Prostate gland (tissue), 2 donors: ENCODE measurements at regions of chr2 and their contacts with region 1.

Region 1: GRCh38 chr2:177164584-177165052 is 48.0 kb upstream of the HNRNPA3 start:
- DNase-seq: peak; percentile 74
- H3K4me3 ChIP-seq: peak overlapping the region; percentile 8 to 22
- H3K27ac ChIP-seq: peak overlapping the region; percentile 69 to 78
- H3K4me1 ChIP-seq: no peaks in the 10 kb centered on the region
- H3K27me3 ChIP-seq: no peaks in the 10 kb centered on the region
- CTCF ChIP-seq: peak; percentile 98 to 100 (median 100)
- POLR2A ChIP-seq: no peak

Region 2: DNA sequence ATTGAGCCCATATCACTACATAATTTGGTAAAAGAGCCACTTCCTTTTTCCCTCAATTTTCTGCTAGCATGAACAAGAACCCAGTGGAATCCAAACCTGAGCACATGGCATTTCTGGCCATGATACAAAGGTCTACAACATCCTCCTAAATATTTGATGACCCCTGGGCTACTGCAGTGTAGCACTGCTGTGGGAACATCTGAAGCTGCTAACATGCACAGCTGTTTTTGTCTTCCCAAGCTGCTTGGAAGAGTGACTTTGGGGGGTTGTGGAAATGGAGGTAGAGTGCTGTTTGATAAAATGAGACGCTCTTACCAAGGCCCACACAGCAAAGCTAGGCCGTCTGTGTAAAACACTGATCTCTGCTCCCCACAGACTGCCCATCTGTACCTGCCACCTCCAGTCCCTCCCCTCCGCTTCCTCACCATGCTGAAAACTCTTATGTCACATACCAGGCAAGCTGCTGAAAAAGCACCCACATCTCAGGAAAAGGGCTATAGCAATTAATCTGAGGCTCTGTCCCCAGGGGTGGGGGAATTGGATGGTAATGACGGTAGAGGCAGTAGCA is 149.2 kb before region 1 on chr2:
- intact Hi-C with region 1: no loop called
- DNase-seq: no peak
- H3K4me3 ChIP-seq: no peak overlapping the region
- H3K27ac ChIP-seq: no peak overlapping the region
- H3K4me1 ChIP-seq: no peaks in the 10 kb centered on the region
- H3K27me3 ChIP-seq: no peaks in the 10 kb centered on the region
- CTCF ChIP-seq: no peak
- POLR2A ChIP-seq: no peak

Region 3: DNA sequence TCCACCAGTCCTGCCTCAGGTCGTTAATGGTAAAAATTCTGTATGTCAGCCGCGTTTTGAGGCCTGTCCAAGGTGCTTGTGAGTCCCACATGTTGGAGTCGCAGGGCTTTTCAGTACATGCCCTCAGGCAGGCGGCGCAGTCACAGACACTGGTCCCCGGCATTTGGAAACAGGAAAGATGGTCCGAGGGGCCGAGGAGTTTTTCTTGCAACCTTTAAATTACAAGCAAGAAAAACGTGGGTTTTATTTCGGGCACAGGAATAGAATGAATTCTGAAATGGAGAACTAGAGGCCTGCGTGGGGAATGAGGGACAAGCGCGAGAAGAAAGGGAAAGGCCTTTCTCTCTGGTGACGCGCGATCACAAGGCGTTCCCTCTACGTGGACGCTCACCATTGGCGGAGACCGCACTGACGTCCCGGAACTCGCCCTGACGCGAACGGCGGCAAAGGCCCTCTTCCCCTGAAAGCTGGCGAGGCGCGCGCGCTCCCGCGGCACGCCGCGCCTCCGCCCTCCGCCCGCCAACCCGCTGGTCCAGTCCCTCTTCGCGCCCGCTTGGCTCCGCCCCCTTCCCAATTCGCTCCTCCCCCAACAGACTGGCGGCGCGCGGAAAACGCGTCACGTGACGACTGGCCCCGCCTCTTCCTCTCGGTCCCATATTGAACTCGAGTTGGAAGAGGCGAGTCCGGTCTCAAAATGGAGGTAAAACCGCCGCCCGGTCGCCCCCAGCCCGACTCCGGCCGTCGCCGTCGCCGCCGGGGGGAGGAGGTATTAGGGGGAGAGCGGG is 47.7 kb after region 1 on chr2 and contains the start of gene HNRNPA3:
- intact Hi-C with region 1: loop called (anchors 2 kb)
- DNase-seq: peak; percentile 99
- H3K4me3 ChIP-seq: peak within 1 kb of the TSS; percentile 78 to 85
- H3K27ac ChIP-seq: peak within 1 kb of the TSS; percentile 99
- H3K4me1 ChIP-seq: peaks cover 9% of the 10 kb centered on the region
- H3K27me3 ChIP-seq: no peaks in the 10 kb centered on the region
- CTCF ChIP-seq: peak in 3 of 4 experiments; percentile 27 to 44 (median 32)
- POLR2A ChIP-seq: peak; percentile 91
- total RNA-seq, gene HNRNPA3: 56.5 to 57.0 TPM

Region 4: GRCh38 chr2:177296040-177296439 is 131.4 kb after region 1 on chr2:
- intact Hi-C with region 1: loop called (anchors 10 kb)
- DNase-seq: no peak
- H3K4me3 ChIP-seq: no peak overlapping the region
- H3K27ac ChIP-seq: peak overlapping the region; percentile 25 to 43
- H3K4me1 ChIP-seq: no peaks in the 10 kb centered on the region
- H3K27me3 ChIP-seq: no peaks in the 10 kb centered on the region
- CTCF ChIP-seq: peak in 3 of 4 experiments; percentile 37 to 56 (median 39)
- POLR2A ChIP-seq: no peak

Region 5: GRCh38 chr2:177419274-177419673 is 254.7 kb after region 1 on chr2:
- intact Hi-C with region 1: loop called (anchors 10 kb)
- DNase-seq: no peak
- H3K4me3 ChIP-seq: no peak overlapping the region
- H3K27ac ChIP-seq: no peak overlapping the region
- H3K4me1 ChIP-seq: no peaks in the 10 kb centered on the region
- H3K27me3 ChIP-seq: no peaks in the 10 kb centered on the region
- CTCF ChIP-seq: no peak
- POLR2A ChIP-seq: no peak

Region 6: GRCh38 chr2:177467646-177468045 is 303.0 kb after region 1 on chr2:
- intact Hi-C with region 1: no loop called
- DNase-seq: no peak
- H3K4me3 ChIP-seq: no peak overlapping the region
- H3K27ac ChIP-seq: no peak overlapping the region
- H3K4me1 ChIP-seq: no peaks in the 10 kb centered on the region
- H3K27me3 ChIP-seq: no peaks in the 10 kb centered on the region
- CTCF ChIP-seq: no peak
- POLR2A ChIP-seq: no peak

Region 7: DNA sequence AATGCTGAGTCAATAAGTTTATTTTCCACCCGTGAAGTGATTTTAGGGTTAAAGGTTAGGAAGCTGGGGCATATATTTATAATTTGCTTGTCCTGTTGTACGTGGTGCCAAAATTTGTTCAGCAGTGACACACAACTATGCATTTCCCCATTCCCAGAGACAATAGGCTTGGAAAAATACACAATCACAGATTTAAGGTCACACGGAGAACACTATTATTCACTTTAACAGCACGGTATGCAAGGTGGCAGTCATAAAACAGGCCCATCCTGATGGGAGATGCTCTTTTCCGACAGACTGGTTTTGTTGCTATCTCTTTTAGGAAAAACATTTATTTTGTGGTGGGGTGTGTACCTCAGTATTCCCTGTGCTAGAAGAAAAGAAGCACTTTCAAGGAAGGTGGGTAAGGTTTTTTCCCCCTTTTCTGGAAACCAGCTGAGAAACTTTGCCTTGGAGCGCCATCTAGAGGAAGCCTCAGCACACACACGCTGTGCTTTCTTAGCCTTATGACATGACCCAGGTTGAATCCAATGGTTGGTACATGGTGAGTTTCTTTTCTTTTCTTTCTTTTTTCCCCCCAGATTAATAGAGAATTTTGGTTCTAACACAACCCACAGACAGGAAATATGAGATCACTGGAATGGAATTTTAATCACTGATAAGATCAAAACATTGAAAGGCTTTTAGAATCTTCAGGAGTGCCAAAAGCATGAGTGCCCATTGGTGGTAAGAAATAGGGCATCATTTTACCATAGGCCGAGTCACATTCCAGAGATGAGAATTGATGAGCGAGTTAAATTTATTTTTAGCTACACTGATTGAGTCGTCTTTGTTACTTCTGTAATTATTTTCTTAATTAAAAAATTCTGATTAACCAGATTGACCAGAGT is 560.0 kb after region 1 on chr2:
- intact Hi-C with region 1: loop called (anchors 10 kb)
- DNase-seq: peak; percentile 9
- H3K4me3 ChIP-seq: no peak overlapping the region
- H3K27ac ChIP-seq: no peak overlapping the region
- H3K4me1 ChIP-seq: peaks cover 13% of the 10 kb centered on the region
- H3K27me3 ChIP-seq: no peaks in the 10 kb centered on the region
- CTCF ChIP-seq: peak; percentile 30 to 78 (median 70)
- POLR2A ChIP-seq: no peak